Activated T-helper 1 cell treated with anti-CD3 and anti-CD28 coated beads, Interleukin-12 subunit alpha, Interleukin-12 subunit beta, Interleukin-2, Interleukin-4 antibody, amounts not matched to agents 30 ng/mL and 10 ng/mL and 1 ng/mL, durations not matched to agents 14 hours and 24 hours and 36 hours (primary cell): ENCODE measurements at regions of chr2 and their contacts with region 1.

Region 1: GRCh38 chr2:28810384-28811285 is at the start of gene SPDYA:
- DNase-seq: peak; percentile 79
- H3K4me3 Mint-ChIP-seq: peak within 1 kb of the TSS; percentile 80
- H3K27ac Mint-ChIP-seq: peak within 1 kb of the TSS; percentile 40
- H3K4me1 Mint-ChIP-seq: peaks cover 12% of the 10 kb centered on the region
- H3K27me3 Mint-ChIP-seq: peaks cover 4% of the 10 kb centered on the region
- total RNA-seq, gene SPDYA: 1.1 and 1.7 TPM in 2 replicates

Region 2: GRCh38 chr2:28780496-28780895 is 30.1 kb before region 1 on chr2:
- intact Hi-C with region 1: loop called (anchors 1 kb)
- DNase-seq: no peak
- H3K4me3 Mint-ChIP-seq: no peak overlapping the region
- H3K27ac Mint-ChIP-seq: peak overlapping the region; percentile 27
- H3K4me1 Mint-ChIP-seq: peaks cover 14% of the 10 kb centered on the region
- H3K27me3 Mint-ChIP-seq: no peaks in the 10 kb centered on the region

Region 3: DNA sequence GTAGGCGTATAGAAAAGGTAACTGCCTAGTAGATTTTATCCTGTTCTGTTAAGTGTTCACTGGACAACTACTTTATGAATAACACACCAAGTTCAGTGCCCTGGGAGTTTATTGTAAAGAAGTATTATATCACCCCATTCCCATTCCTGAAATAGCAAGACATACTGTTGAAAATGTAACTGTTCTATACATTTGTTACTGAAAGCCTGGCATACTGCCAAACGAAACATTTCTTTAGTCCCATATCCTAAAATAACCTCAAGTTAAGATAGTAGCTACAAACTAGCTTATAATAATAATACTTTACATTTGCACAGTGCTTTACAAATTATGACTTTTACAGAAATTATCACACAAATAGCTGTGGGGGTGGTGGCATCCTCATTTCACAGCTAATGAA is 25.1 kb after region 1 on chr2:
- intact Hi-C with region 1: no loop called
- DNase-seq: no peak
- H3K4me3 Mint-ChIP-seq: no peak overlapping the region
- H3K27ac Mint-ChIP-seq: no peak overlapping the region
- H3K4me1 Mint-ChIP-seq: no peaks in the 10 kb centered on the region
- H3K27me3 Mint-ChIP-seq: peaks cover 2% of the 10 kb centered on the region

Region 4: DNA sequence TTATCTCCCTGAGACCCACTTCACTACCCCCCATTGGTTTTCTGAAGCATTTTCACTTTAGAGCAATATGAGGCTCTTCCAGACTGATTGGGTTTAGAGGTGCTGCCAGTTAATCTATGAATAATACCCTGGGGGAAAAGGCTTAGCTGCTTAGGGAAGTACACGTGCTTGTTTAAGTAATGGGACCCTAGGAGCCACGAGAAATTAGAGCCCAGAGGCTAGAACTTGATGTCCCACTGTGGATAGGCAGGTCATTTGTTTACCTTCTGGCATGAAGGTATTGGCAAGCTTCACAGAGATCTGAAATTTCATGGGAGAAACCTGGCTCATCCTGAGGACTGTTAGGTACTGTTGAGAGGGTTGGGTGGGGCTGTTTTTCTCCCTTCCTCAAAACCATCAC is 364.3 kb after region 1 on chr2:
- intact Hi-C with region 1: no loop called
- DNase-seq: no peak
- H3K4me3 Mint-ChIP-seq: no peak overlapping the region
- H3K27ac Mint-ChIP-seq: no peak overlapping the region
- H3K4me1 Mint-ChIP-seq: no peaks in the 10 kb centered on the region
- H3K27me3 Mint-ChIP-seq: no peaks in the 10 kb centered on the region